ENCODE measurements at regions of chr1 and their contacts with region 1.

Region 1: DNA sequence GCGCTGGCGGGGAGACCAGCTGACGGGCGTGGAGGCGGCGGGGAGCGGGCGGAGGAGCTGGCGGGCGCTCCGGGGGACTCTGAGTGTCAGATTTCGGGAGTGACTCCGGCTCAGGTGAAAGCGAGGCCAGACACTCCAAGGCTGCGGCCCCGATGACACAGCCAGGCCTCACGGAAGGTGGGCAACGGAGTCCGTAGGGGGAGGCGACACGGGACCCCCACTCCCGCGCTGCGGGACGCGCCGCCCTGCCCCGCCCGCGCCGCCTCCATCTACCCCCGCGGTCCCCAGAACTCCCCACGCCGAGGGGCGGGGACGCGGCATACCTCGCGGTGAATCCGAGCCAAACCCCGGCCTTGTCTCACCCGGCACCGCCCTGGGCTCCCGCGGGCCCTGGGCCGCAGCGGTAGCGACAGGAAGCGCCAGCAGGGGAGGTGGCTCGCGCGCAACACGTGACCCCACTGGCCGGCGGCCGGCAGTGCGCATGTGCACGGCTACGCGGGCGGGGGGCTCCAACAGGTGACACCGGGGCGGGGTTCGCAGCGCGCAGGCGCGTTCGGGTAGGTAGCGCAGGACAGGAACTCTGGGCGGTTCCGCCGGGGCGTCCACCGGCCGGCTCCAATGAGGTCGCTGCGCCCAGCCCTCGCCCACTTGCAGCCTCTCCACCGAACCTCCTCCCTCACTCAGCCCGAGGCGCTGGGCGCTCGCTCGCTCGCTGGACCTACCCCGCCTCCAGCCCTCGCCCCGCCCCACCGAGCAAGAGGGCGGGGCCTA is at the start of gene CC2D1B:
- DNase-seq: peak; percentile 98 to 100 (median 99)
- ATAC-seq: peak; percentile 79
- H3K4me3 ChIP-seq: peak within 1 kb of the TSS; percentile 82 to 89
- H3K4me3 Mint-ChIP-seq: peak within 1 kb of the TSS; percentile 90
- H3K27ac ChIP-seq: peak within 1 kb of the TSS; percentile 88 to 89
- H3K27ac Mint-ChIP-seq: peak within 1 kb of the TSS; percentile 94
- H3K4me1 ChIP-seq: peaks cover 41% of the 10 kb centered on the region
- H3K4me1 Mint-ChIP-seq: peaks cover 41% of the 10 kb centered on the region
- H3K27me3 ChIP-seq: no peaks in the 10 kb centered on the region
- H3K27me3 Mint-ChIP-seq: no peaks in the 10 kb centered on the region
- CTCF ChIP-seq: no peak
- total RNA-seq, gene CC2D1B: 38.8 to 40.6 TPM

Region 2: GRCh38 chr1:51519048-51519864 is 846.7 kb before region 1 on chr1 and contains the start of gene EPS15:
- CTCF ChIA-PET with region 1: no interaction called
- POLR2A ChIA-PET with region 1: no interaction called
- intact Hi-C with region 1: loop called in 1 of 2 experiments (anchors 5 kb)
- DNase-seq: peak; percentile 70 to 90 (median 83)
- ATAC-seq: peak; percentile 65
- H3K4me3 ChIP-seq: peak within 1 kb of the TSS; percentile 76 to 82
- H3K4me3 Mint-ChIP-seq: peak within 1 kb of the TSS; percentile 94
- H3K27ac ChIP-seq: peak within 1 kb of the TSS; percentile 47 to 81
- H3K27ac Mint-ChIP-seq: peak within 1 kb of the TSS; percentile 93
- H3K4me1 ChIP-seq: peaks cover 38% of the 10 kb centered on the region
- H3K4me1 Mint-ChIP-seq: peaks cover 57% of the 10 kb centered on the region
- H3K27me3 ChIP-seq: no peaks in the 10 kb centered on the region
- H3K27me3 Mint-ChIP-seq: no peaks in the 10 kb centered on the region
- CTCF ChIP-seq: no peak
- total RNA-seq, gene EPS15: 49.9 to 52.2 TPM

Region 3: DNA sequence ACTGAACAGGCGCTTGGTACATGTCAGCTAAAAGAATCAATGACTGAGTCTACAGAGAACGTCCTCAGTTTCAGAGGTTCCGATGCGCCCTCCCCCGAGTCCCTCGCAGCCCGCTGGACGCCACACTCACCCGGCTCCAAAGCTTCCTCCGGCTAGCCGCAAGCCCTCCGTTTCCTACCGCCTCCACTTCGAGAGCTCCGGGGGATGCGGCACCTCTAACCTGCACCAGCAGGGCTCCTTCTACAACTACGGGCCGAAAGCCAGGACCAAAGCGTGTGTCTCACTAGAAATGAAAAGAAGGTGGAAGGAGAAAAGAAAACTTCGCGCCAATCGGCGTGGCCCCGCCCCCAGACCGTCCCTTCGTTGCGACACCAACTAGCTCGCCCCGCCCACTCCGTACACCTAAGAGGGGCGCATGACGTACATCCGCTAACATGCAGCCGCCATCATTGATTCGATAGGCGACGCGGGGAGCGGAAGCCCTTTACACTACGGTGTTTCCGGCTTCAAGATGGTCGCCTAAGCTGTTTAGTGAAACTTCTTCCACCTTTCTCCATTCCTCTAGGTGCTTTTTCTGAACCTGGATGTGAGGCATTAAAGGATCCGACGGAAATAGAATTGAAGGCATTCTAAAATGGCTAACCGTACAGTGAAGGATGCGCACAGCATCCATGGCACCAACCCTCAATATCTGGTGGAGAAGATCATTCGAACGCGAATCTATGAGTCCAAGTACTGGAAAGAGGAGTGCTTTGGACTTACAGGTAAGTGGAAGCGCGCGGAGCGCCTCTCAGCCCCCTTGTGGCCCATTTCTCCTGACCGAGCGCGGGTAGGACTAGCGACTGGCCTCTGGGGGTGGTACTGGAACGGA is 38.4 kb after region 1 on chr1 and contains the starts of genes ORC1 and PRPF38A:
- CTCF ChIA-PET with region 1: interaction called, 3 read pairs
- POLR2A ChIA-PET with region 1: interaction called, 24 read pairs
- intact Hi-C with region 1: loop called (anchors 1 kb)
- DNase-seq: peak; percentile 94 to 99 (median 98)
- ATAC-seq: peak; percentile 92
- H3K4me3 ChIP-seq: peak within 1 kb of the TSS; percentile 87 to 92
- H3K4me3 Mint-ChIP-seq: peak within 1 kb of the TSS; percentile 99
- H3K27ac ChIP-seq: peak within 1 kb of the TSS; percentile 96
- H3K27ac Mint-ChIP-seq: peak within 1 kb of the TSS; percentile 98
- H3K4me1 ChIP-seq: peaks cover 26% of the 10 kb centered on the region
- H3K4me1 Mint-ChIP-seq: peaks cover 42% of the 10 kb centered on the region
- H3K27me3 ChIP-seq: no peaks in the 10 kb centered on the region
- H3K27me3 Mint-ChIP-seq: no peaks in the 10 kb centered on the region
- CTCF ChIP-seq: no peak
- total RNA-seq, gene ORC1: 1.2 to 1.3 TPM
- total RNA-seq, gene PRPF38A: 52.2 to 62.0 TPM

Region 4: DNA sequence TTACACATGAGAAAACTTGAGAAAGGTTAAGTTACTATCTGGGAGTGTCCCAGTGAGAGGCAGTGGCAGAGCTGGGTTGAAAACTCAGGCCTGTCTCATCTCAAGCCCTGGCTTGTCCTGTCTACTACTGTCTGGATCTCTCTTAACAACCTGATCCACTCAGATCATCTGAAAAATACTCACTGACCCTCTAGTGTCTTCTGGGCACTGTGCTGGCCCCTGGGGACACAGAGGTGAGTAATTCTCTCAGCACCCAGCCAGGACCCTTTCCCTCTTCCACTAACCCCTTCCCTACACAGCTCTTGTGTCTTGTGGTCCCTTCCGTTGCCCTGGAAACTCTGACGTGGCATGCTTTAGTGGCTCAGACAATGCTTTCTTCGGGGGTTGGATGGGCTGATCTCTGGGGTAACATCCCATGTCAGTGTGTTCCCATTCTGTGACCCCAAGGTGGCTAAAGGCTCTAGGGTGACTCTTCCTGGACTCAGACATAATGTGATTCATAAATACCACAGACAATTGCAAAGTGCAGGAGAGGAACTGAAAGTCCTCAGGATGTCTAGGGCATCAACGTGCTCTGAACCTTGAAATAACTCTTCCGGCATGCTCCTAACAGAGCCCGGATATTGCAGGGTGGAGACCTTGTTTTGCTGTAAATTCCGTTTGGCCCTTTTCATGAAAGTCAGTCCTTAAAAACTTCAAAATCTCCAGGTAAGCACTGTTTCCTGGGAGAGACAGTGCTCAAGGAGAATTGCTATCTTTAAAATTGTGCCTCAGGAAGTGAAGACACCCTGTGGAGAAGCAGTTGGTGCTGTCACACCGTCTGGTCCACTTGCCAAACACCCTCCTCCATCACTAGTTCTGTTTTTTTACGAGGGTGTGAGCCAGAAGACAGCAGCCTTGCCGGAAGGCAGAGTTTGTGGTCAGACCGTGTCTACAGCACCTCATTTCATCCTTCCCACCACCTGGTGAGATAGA is 271.1 kb after region 1 on chr1:
- CTCF ChIA-PET with region 1: no interaction called
- POLR2A ChIA-PET with region 1: no interaction called
- intact Hi-C with region 1: loop called in 1 of 2 experiments (anchors 5 kb)
- DNase-seq: peak; percentile 44 to 91 (median 78)
- ATAC-seq: peak; percentile 60
- H3K4me3 ChIP-seq: peak overlapping the region; percentile 27 to 31
- H3K4me3 Mint-ChIP-seq: peak overlapping the region; percentile 77
- H3K27ac ChIP-seq: peak overlapping the region; percentile 89 to 99
- H3K27ac Mint-ChIP-seq: peak overlapping the region; percentile 99
- H3K4me1 ChIP-seq: peaks cover 83% of the 10 kb centered on the region
- H3K4me1 Mint-ChIP-seq: peaks cover 80% of the 10 kb centered on the region
- H3K27me3 ChIP-seq: no peaks in the 10 kb centered on the region
- H3K27me3 Mint-ChIP-seq: no peaks in the 10 kb centered on the region
- CTCF ChIP-seq: no peak

Region 5: DNA sequence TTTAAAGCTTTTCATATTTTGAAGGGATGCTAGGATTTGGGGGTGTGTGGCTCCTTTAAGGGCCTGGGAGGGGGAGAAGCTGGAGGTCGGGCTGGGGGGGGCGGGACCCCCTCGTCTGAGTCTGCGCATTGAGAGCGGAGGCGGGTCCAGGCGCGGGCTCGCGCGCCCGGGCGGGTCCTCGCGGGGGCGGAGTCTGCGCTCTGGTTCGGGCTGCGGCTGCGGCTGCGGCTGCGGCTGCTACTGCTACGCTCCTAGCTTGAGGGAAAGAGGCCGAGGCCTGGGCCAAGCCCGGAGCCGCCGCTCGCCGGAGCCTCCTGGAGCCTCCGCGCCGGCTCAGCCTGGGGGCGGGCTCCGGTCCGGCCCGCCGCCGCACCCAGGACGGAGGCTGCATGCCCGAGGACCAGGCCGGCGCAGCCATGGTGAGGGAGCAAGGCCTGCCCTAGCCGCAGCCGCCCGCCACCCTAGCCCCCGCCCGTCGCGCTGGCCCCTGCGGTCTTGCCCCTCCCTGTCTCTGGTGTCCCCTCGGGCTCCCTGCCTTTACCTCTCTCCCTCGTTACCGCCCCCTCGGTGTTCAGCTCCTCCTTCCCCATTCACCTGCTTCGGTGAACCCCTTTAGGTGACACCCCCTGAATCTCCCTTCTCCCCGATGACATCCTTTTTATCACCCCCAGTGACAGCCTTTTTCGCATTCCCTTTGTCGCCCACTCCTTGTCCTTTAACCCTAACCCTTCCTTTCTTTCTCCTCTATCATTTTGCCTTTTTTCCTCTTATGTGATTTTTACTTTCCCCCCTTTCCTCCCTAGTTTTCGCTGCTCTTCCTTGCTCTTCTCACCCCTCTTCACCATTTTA is 360.6 kb after region 1 on chr1 and contains the start of gene ZYG11B:
- CTCF ChIA-PET with region 1: no interaction called
- POLR2A ChIA-PET with region 1: interaction called, 3 read pairs
- intact Hi-C with region 1: loop called (anchors 1 kb)
- DNase-seq: peak; percentile 80 to 95 (median 89)
- ATAC-seq: peak; percentile 89
- H3K4me3 ChIP-seq: peak within 1 kb of the TSS; percentile 56 to 72
- H3K4me3 Mint-ChIP-seq: peak within 1 kb of the TSS; percentile 90
- H3K27ac ChIP-seq: peak within 1 kb of the TSS; percentile 37 to 48
- H3K27ac Mint-ChIP-seq: peak within 1 kb of the TSS; percentile 84
- H3K4me1 ChIP-seq: peaks cover 16% of the 10 kb centered on the region
- H3K4me1 Mint-ChIP-seq: peaks cover 42% of the 10 kb centered on the region
- H3K27me3 ChIP-seq: peaks cover 0 to 3% of the 10 kb centered on the region in 2 experiments
- H3K27me3 Mint-ChIP-seq: peaks cover 3% of the 10 kb centered on the region
- CTCF ChIP-seq: no peak
- total RNA-seq, gene ZYG11B: 9.8 to 10.4 TPM

Region 6: GRCh38 chr1:53326088-53326597 is 960.2 kb after region 1 on chr1:
- CTCF ChIA-PET with region 1: no interaction called
- POLR2A ChIA-PET with region 1: no interaction called
- intact Hi-C with region 1: loop called (anchors 5 to 10 kb)
- DNase-seq: peak; percentile 78 to 94 (median 92)
- ATAC-seq: peak; percentile 89
- H3K4me3 ChIP-seq: peak overlapping the region; percentile 74 to 82
- H3K4me3 Mint-ChIP-seq: peak overlapping the region; percentile 94
- H3K27ac ChIP-seq: peak overlapping the region; percentile 26 to 66
- H3K27ac Mint-ChIP-seq: peak overlapping the region; percentile 77
- H3K4me1 ChIP-seq: peaks cover 6% of the 10 kb centered on the region
- H3K4me1 Mint-ChIP-seq: peaks cover 16% of the 10 kb centered on the region
- H3K27me3 ChIP-seq: no peaks in the 10 kb centered on the region
- H3K27me3 Mint-ChIP-seq: no peaks in the 10 kb centered on the region
- CTCF ChIP-seq: no peak